Mammary epithelial cell (primary cell): ENCODE measurements at regions of chr1 and their contacts with region 1.

Region 1: DNA sequence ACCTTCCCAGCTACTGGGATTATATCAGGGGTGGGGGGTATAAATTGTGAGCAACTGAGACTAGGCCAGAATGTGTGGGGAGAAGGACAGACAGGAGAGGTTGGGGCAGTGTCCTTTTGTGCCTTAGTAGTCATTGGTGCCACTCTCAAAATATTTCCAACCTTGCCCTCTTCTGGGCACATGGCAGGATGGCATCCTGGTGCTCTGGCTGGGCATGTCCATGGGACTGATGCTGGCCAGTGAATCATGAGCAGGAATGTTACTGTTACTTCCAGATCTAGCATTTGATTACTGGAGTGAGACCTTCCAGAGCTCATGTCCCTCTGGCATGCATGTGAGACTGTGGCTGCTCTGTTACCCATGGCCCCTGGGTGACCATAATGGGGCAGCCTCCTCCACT is 151.2 kb downstream of the MATN1 start:
- DNase-seq: peak; percentile 58
- H3K4me3 ChIP-seq: no peak overlapping the region
- H3K27ac ChIP-seq: no peak overlapping the region
- H3K4me1 ChIP-seq: peaks cover 20% of the 10 kb centered on the region
- H3K27me3 ChIP-seq: no peaks in the 10 kb centered on the region
- CTCF ChIP-seq: peak; percentile 48 to 67

Region 2: DNA sequence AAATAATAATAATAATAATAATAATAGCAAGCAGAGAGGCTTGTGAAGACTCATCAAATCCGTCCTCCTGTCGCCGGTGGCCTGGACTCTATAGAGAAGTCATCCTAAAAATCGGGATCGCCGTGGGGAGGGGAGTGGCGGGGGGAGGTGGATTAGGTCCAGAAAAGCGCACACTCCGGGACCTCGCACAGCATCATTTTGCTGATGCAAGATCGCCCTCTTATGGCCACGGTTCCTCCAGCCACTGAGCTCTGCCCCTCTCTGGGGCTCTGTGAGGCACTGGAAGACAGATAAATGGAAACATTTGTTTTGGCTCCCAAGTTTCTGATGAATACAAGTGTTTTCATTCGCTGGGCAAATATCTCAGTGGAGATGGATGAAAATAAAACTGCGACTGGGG is 460.8 kb before region 1 on chr1:
- CTCF ChIA-PET with region 1: no interaction called
- dilution Hi-C with region 1: no loop called
- in situ Hi-C with region 1: no loop called
- intact Hi-C with region 1: loop called (anchors 5 kb)
- DNase-seq: peak; percentile 16
- H3K4me3 ChIP-seq: no peak overlapping the region
- H3K27ac ChIP-seq: no peak overlapping the region
- H3K4me1 ChIP-seq: no peaks in the 10 kb centered on the region
- H3K27me3 ChIP-seq: no peaks in the 10 kb centered on the region
- CTCF ChIP-seq: peak; percentile 43 to 69

Region 3: GRCh38 chr1:30379684-30380624 is 192.2 kb before region 1 on chr1:
- CTCF ChIA-PET with region 1: no interaction called
- dilution Hi-C with region 1: no loop called
- in situ Hi-C with region 1: no loop called
- intact Hi-C with region 1: loop called (anchors 5 kb)
- DNase-seq: peak; percentile 68
- H3K4me3 ChIP-seq: no peak overlapping the region
- H3K27ac ChIP-seq: no peak overlapping the region
- H3K4me1 ChIP-seq: peaks cover 23% of the 10 kb centered on the region
- H3K27me3 ChIP-seq: no peaks in the 10 kb centered on the region
- CTCF ChIP-seq: peak; percentile 89 to 93

Region 4: DNA sequence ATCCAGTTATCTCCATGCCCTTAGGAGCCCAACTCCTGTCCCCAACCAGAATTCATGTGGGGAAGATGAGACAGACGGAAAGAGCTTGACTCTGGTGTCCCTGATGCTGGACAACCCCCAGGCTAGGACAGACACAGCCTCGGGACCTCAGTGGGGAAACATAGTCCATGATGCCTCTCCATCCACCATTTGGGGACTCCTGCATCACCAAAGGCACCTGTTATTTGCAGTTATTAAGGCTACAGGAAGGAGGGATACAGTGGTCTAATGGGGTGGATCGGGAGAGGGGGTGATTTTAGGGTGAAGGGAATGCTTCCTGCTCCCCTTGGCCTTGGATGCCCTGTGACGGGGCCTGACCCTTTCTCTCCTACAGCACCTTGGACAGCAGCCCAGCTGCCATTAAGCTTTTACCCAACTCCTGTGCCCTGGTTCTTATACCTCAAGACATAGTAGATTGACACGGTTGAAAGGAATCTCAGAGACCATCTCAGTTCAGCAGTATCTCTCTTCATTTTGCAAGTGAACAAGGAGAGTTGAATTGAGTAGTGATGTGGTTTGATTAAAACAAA is 39.6 kb after region 1 on chr1:
- CTCF ChIA-PET with region 1: no interaction called
- dilution Hi-C with region 1: no loop called
- in situ Hi-C with region 1: no loop called
- intact Hi-C with region 1: loop called (anchors 2 kb)
- DNase-seq: no peak
- H3K4me3 ChIP-seq: no peak overlapping the region
- H3K27ac ChIP-seq: no peak overlapping the region
- H3K4me1 ChIP-seq: peaks cover 40% of the 10 kb centered on the region
- H3K27me3 ChIP-seq: no peaks in the 10 kb centered on the region
- CTCF ChIP-seq: no peak

Region 5: DNA sequence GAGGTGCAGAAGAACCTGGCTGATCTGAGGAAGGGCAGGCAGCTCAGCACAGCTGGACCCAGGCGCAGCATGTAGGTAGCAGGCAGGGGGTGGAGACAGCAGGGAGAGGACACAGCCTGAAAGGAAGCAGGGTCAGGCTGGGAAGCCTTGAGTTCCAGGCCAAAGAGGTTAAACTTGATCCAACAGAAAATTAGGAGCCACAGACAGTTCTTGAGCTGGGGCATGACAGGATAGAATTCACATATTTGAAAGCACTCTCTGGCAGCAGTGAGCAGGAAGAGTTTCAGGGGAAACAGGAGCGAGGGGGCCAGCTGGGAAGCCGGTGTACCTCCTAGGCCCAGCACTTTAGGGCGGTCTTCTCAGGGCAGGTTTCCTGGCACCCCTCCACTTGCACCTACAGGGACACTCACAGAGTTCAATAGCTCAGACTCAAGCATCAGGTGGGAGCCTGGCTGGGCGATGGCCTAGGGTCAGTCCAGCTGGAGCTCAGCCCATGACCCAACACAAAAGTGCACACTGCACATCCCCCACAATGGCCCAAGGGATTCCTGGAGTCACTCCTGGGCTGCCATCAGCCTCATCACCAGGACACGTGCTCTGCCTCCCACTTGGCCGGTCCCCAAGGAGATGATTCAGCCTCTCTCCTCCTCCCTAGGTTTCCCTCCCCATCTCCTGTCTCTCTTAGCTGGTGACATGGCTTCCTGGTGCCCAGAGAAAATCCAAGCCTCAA is 128.5 kb after region 1 on chr1:
- CTCF ChIA-PET with region 1: no interaction called
- dilution Hi-C with region 1: no loop called
- in situ Hi-C with region 1: no loop called
- intact Hi-C with region 1: loop called (anchors 1 kb)
- DNase-seq: peak; percentile 68
- H3K4me3 ChIP-seq: no peak overlapping the region
- H3K27ac ChIP-seq: no peak overlapping the region
- H3K4me1 ChIP-seq: peaks cover 24% of the 10 kb centered on the region
- H3K27me3 ChIP-seq: no peaks in the 10 kb centered on the region
- CTCF ChIP-seq: no peak